K562 (cell line): ENCODE measurements at regions of chr4 and their contacts with region 1.

Region 1: DNA sequence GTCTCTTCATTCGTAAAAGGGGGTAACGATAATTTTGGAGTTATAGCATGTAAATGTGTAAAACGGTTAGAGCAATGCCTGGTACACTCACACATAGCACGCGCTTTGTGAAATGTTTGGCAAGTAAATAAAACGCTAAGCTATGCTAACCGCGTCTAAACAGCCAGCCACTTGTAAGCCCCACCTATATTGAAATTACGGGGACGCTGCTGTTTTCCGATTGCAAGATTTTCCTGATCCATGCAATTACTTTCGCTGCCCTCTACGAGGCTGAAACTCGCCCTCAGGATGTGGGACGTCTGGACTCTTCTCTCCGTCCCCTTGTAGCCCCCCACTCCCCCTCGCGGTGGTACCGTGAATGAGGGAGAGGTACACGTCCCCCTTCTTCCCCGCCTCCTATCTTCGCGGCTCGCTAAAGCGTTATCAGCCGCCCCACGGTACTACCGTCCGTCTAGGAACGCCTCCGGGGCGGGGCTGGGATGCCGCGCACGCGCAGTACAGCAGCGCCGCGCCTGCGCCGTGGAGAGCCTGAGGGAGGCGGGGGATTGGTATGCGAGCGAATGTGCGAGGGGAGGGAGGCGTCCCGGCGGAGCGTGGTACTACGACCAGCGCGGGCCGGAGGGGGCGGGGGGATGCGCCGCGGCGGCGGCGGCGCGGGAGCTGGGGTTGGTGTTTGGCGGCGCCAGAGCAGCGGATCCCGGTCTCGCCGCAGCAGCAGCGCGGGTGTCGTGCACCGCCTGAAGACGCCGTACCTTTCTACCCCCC is at the start of gene STIM2:
- DNase-seq: peak; percentile 92 to 98 (median 94)
- ATAC-seq: peak; percentile 84
- H3K4me3 ChIP-seq: peak within 1 kb of the TSS; percentile 73
- H3K27ac ChIP-seq: peak within 1 kb of the TSS; percentile 65
- H3K4me1 ChIP-seq: peaks cover 12 to 16% of the 10 kb centered on the region in 2 experiments; a peak in 3 of 5 replicates
- H3K27me3 ChIP-seq: no peaks in the 10 kb centered on the region
- CTCF ChIP-seq: peak; percentile 63 to 68 (median 68)
- EP300 ChIP-seq: 0 out of 2 replicates have a peak, but pooled peaks have one; percentile 6
- POLR2A ChIP-seq: peak; percentile 80
- RAD21 ChIP-seq: peak; percentile 46 to 60
- polyA plus RNA-seq, gene STIM2: 7.2 to 12.6 TPM

Region 2: GRCh38 chr4:26459054-26459755 is 401.1 kb before region 1 on chr4:
- CTCF ChIA-PET with region 1: no interaction called
- POLR2A ChIA-PET with region 1: no interaction called
- in situ Hi-C with region 1: no loop called
- intact Hi-C with region 1: loop called (anchors 10 kb)
- DNase-seq: peak; percentile 40 to 53 (median 48)
- ATAC-seq: peak; percentile 84
- H3K4me3 ChIP-seq: no peak overlapping the region
- H3K27ac ChIP-seq: no peak overlapping the region
- H3K4me1 ChIP-seq: no peaks in the 10 kb centered on the region
- H3K27me3 ChIP-seq: peaks cover 4 to 16% of the 10 kb centered on the region in 2 experiments; a peak in 4 of 5 replicates
- CTCF ChIP-seq: peak; percentile 38 to 68 (median 61); a peak in 5 of 6 replicates
- EP300 ChIP-seq: no peak
- POLR2A ChIP-seq: no peak
- RAD21 ChIP-seq: peak; percentile 77 to 81

Region 3: DNA sequence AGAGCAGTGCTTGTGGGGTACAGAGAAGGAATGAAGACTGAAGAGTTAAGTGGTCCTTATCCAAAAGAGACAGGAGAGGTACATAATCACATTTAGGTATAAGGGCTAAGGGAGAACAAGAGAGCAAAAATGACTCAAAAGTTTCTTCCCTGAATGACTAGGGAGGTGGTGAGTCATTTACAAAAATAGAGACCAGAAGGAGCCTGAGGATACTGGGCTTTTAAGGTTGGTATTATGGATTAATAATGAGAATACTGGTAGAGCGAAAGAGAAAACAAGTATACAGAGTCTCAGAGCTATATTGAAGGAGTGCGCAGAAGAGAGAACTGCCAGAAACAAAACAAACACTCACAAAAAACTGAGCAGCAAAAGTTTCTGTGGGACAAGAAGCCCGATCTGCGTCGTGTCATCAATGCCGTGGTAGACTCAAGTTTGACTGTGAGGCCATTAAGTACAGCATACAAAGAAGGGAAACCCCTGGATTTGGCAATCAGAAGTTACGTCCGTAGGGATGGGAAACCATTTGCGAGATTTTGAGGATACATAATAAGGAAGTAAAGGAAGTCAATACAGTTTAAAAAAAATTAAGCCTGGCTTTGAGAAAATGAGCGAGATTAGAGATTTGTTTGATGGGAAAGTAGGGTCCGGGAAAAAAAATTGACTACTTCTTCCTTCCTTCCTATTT is 128.8 kb before region 1 on chr4:
- CTCF ChIA-PET with region 1: no interaction called
- POLR2A ChIA-PET with region 1: no interaction called
- in situ Hi-C with region 1: no loop called
- intact Hi-C with region 1: loop called (anchors 10 kb)
- DNase-seq: no peak
- ATAC-seq: no peak
- H3K4me3 ChIP-seq: no peak overlapping the region
- H3K27ac ChIP-seq: no peak overlapping the region
- H3K4me1 ChIP-seq: no peaks in the 10 kb centered on the region
- H3K27me3 ChIP-seq: no peaks in the 10 kb centered on the region
- CTCF ChIP-seq: no peak
- EP300 ChIP-seq: no peak
- POLR2A ChIP-seq: no peak
- RAD21 ChIP-seq: no peak

Region 4: DNA sequence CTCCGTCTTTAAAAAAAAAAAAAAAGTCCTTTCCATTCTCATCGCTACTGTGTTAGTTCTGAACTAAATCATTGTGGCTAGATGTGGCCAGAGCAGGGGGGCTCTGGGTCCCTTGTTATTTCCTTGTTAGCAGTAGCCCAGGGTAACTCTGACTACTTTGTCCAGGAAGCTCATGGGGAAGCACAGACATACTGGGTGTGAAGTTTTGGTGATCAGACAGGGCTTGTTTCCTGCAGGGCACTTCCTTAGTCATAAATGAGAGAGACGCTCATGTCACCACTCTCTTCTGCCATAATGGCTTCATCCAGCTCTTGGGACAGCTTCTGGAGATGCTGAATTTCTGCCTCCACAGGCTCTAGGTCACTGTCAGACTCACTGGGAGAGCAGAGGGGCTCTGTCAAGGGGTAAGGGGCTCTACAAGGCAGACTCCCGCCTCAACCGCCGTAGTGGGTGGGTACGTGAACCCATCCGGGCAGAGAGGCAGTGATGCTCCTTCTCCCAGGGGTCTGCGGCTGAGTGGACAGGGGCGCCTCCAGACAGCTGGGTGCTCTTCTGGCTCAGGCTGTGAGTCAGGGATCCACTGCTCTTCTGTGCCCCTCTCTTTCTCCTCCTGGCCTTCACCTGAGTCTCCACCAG is 13.2 kb after region 1 on chr4:
- CTCF ChIA-PET with region 1: no interaction called
- POLR2A ChIA-PET with region 1: interaction called, 14 read pairs
- in situ Hi-C with region 1: no loop called
- intact Hi-C with region 1: no loop called
- DNase-seq: no peak
- ATAC-seq: peak; percentile 43
- H3K4me3 ChIP-seq: no peak overlapping the region
- H3K27ac ChIP-seq: no peak overlapping the region
- H3K4me1 ChIP-seq: peaks cover 0 to 4% of the 10 kb centered on the region in 2 experiments; a peak in 1 of 5 replicates
- H3K27me3 ChIP-seq: no peaks in the 10 kb centered on the region
- CTCF ChIP-seq: no peak
- EP300 ChIP-seq: no peak
- POLR2A ChIP-seq: no peak
- RAD21 ChIP-seq: no peak

Region 5: DNA sequence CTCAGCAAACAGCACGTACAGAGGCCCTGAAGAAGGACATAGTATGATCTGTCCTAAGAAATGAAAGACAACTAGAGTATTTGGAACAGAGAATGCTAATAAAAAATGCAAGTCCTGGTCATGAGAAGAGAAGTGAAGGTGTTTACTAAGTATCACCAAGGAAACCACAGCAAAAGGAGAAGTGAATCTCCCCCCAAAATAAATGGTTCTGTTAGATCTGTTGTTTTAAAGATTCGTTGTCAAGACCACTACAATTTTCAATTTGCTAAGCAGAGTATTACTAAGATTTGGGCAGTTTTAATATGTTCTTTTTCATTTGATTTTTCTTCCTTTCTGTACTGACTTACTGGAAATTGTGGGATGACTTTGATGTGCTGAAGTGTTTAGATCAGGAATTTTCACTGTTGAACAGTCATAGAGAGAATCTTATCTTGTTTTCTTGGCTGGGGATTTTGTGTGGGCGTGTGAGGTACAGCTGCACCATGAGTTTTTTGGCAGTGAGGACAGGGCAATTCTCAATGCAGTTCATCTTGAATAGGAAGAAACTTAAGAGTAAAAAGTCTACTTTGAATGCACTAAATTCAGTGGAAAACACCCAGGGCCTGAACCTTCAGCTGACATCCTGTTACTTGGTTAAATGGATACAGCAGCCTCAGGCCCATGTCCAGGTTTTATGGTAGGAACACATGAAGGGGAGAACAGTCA is 132.5 kb after region 1 on chr4:
- CTCF ChIA-PET with region 1: no interaction called
- POLR2A ChIA-PET with region 1: interaction called, 3 read pairs
- in situ Hi-C with region 1: no loop called
- intact Hi-C with region 1: loop called (anchors 5 kb)
- DNase-seq: peak in 3 of 4 experiments; percentile 11 to 60 (median 37)
- ATAC-seq: peak; percentile 79
- H3K4me3 ChIP-seq: no peak overlapping the region
- H3K27ac ChIP-seq: peak overlapping the region; percentile 28; the same call in 1 of the 3 replicates
- H3K4me1 ChIP-seq: peaks cover 0 to 13% of the 10 kb centered on the region in 2 experiments; a peak in 2 of 5 replicates
- H3K27me3 ChIP-seq: no peaks in the 10 kb centered on the region
- CTCF ChIP-seq: no peak
- EP300 ChIP-seq: 0 out of 2 replicates have a peak, but pooled peaks have one; percentile 42
- POLR2A ChIP-seq: no peak
- RAD21 ChIP-seq: no peak

Region 6: GRCh38 chr4:27206009-27206408 is 345.7 kb after region 1 on chr4:
- CTCF ChIA-PET with region 1: no interaction called
- POLR2A ChIA-PET with region 1: no interaction called
- in situ Hi-C with region 1: no loop called
- intact Hi-C with region 1: no loop called
- DNase-seq: no peak
- ATAC-seq: no peak
- H3K4me3 ChIP-seq: no peak overlapping the region
- H3K27ac ChIP-seq: no peak overlapping the region
- H3K4me1 ChIP-seq: no peaks in the 10 kb centered on the region
- H3K27me3 ChIP-seq: no peaks in the 10 kb centered on the region
- CTCF ChIP-seq: no peak
- EP300 ChIP-seq: no peak
- POLR2A ChIP-seq: no peak
- RAD21 ChIP-seq: no peak